Dorsolateral prefrontal cortex (tissue), 120 donors: ENCODE measurements at regions of chr19 and their contacts with region 1.

Region 1: GRCh38 chr19:18450931-18451845 is 13.3 kb upstream of the ISYNA1 start:
- DNase-seq: peak; percentile 82 to 97 (median 92)
- H3K4me3 ChIP-seq: peak overlapping the region in 1 of 59 donors; percentile 19
- H3K27ac ChIP-seq: peak overlapping the region in 19 of 59 donors; percentile 1 to 72 (median 36)
- H3K27me3 ChIP-seq: no peaks in the 10 kb centered on the region
- CTCF ChIP-seq: peak; percentile 91 to 99 (median 98)

Region 2: GRCh38 chr19:18503971-18504885 is 53.0 kb after region 1 on chr19:
- intact Hi-C with region 1: no loop called
- DNase-seq: no peak
- H3K4me3 ChIP-seq: no peak overlapping the region
- H3K27ac ChIP-seq: peak overlapping the region in 57 of 59 donors; percentile 4 to 97 (median 79)
- H3K27me3 ChIP-seq: no peaks in the 10 kb centered on the region
- CTCF ChIP-seq: no peak

Region 3: DNA sequence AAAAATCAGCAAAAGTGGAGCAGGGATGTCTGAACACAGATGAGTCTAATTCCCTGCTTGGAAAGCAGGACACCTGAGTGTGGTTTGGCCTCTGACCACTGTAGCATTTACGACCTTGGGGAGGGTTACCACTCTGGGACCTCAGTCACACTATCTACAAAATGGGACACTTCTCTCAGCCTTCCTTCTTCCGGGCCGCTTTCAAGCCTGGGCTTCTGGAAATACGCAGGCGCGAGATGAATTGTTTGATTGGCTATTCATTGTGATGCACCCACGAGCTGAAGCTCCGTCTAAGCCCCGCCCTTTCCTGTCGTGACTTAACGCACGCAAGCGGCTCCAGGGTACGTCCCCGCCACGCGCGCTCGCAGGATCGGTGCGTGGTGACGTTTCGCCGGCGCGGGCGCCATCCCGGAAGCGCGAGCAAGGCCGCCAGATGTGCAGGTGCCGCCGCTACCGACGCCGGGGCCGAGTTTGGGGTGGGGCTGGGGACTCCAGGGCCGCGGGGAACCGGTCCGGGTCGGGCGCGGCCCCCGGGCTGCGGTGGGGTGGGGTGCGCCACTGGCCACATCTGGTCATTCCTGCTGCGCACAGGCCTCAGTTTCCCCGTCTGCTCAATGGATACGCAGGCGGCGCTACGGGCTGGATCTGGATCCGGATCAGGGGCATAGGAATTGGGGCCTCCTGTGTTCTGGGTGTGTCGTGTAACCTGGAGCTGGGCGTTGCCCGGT is 106.5 kb after region 1 on chr19 and contains the start of gene KXD1:
- intact Hi-C with region 1: loop called in 1 of 2 experiments (anchors 10 kb)
- DNase-seq: peak; percentile 94 to 99 (median 98)
- H3K4me3 ChIP-seq: peak within 1 kb of the TSS; percentile 80 to 99 (median 95)
- H3K27ac ChIP-seq: peak within 1 kb of the TSS; percentile 65 to 97 (median 90)
- H3K27me3 ChIP-seq: no peaks in the 10 kb centered on the region
- CTCF ChIP-seq: peak in 17 of 56 donors; percentile 5 to 48 (median 21)
- total RNA-seq, gene KXD1: 46.5 to 90.8 (median 64.8) TPM

Region 4: DNA sequence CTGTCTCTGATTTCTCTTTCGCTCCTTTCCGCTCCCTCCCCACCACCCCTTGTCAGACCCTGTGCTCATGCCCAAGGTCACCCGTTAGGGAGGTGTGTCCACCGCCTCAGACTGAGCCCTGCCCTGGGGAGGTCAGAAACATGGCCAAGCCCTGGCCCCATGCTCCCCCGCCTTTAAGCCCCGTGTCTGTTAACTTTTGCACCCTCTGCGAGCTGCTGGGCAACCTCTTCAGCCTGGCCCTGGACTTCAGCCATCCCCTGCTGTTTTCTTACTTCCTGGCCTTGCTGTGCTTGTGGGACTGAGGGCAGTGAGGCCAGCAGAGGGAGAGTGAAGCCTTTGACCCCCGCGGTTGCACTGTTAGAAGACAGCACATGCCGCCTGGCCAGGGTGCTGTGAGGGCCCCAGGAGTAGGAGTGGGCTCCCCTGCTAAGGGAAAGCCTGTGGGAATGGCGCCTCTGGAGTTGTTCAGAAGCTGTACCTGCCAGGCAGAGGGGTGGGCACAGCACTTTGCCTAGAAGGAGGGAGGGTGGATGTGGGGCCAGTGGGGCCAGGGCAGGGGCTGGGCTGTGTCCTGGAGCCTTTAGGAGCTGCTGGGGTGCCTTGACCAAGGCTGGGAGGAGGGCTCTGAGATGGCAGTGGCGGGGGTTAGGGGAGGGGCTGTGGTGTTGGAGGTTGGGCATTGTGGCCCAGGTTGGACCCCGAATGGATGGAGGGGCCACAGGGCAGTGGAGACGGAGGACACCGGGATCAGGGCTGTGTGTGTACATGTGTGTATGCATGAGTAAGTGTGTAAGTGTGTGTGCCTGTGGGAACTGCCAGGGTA is 388.5 kb after region 1 on chr19:
- intact Hi-C with region 1: loop called in 1 of 2 experiments (anchors 5 kb)
- DNase-seq: no peak
- H3K4me3 ChIP-seq: no peak overlapping the region
- H3K27ac ChIP-seq: no peak overlapping the region
- H3K27me3 ChIP-seq: no peaks in the 10 kb centered on the region
- CTCF ChIP-seq: no peak

Region 5: DNA sequence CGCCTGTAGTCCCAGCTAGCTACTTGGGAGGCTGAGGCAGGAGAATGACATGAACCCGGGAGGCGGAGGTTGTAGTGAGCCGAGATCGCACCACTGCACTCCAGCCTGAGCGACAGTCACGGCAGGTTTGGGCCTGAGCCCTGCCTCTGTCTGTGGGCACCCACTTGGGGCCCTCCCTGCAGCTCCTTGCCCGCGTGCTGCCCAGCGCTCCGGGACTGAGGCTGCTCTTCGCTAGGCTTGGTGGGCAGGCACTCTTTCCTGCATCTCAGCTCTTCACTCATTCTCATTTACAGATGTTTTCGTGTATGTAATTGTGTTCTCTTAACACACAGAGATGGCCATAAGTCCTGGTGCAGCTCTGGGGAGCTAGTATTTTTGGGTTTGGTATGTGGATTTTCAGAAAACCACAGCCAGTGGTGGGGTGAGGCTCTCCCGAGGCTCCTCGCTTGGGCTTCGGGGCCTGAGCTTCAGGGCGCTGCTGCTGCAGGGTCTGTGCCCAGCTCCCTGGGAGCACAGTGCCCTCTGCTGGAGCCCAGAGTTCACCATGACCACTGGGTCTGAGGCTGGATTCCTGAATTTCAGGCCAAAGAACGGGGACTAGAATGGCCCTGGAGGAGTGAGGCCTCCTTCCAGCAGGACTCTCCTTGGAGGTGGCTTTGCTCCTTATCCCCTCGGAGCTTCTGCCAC is 395.8 kb after region 1 on chr19:
- intact Hi-C with region 1: loop called (anchors 5 kb)
- DNase-seq: peak; percentile 71 to 91 (median 80)
- H3K4me3 ChIP-seq: peak overlapping the region in 8 of 59 donors; percentile 0 to 19 (median 7)
- H3K27ac ChIP-seq: peak overlapping the region in 53 of 59 donors; percentile 28 to 93 (median 79)
- H3K27me3 ChIP-seq: no peaks in the 10 kb centered on the region
- CTCF ChIP-seq: peak; percentile 54 to 93 (median 83)

Region 6: DNA sequence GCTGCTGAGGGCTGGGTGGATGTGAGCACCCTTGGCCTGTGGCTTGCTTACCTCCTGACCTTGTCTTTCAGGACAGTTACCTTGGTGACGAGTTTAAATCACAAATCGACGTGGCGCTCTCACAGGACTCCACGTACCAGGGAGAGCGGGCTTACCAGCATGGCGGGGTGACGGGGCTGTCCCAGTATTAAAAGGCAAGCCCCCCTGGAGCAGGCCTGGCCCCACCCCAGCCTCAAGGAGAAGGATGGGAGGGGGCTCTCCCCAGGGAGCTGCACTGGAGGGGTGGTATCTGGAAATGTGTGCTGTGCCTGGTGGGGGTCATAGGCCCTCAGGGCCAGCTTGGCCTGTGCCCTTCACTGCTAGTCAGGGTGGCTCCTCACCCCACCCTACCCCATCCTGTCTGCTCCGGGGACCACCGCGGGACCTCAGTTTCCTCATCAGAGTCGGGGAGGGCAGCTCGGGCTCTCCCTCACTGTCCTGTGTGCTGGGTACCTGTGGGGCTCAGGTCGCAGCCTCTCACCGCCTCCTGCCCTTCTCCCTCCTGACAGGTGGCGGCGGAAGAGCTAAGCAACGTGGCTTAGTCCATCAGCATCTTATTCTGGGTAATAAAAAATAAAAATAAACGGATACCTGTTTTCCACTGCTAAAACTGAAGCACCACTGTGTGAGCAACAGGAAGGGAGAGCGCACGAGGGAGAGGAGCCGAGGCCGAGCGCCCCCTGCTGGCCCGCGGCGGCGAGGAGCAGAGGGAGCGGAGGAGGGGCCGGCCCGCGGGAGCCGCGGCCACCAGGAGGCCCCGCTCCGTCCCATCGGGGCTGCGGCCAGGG is 415.0 kb after region 1 on chr19:
- intact Hi-C with region 1: loop called in 1 of 2 experiments (anchors 5 kb)
- DNase-seq: peak in 8 of 10 donors; percentile 54 to 84 (median 64)
- H3K4me3 ChIP-seq: peak overlapping the region in 2 of 59 donors; percentile 1 to 12
- H3K27ac ChIP-seq: peak overlapping the region in 43 of 59 donors; percentile 2 to 71 (median 50)
- H3K27me3 ChIP-seq: peaks cover 0 to 3% (median 0%) of the 10 kb centered on the region in 45 donors
- CTCF ChIP-seq: peak; percentile 82 to 100 (median 98)